Pancreas (tissue), 10 donors: ENCODE measurements at regions of chr2 and their contacts with region 1.

Region 1: DNA sequence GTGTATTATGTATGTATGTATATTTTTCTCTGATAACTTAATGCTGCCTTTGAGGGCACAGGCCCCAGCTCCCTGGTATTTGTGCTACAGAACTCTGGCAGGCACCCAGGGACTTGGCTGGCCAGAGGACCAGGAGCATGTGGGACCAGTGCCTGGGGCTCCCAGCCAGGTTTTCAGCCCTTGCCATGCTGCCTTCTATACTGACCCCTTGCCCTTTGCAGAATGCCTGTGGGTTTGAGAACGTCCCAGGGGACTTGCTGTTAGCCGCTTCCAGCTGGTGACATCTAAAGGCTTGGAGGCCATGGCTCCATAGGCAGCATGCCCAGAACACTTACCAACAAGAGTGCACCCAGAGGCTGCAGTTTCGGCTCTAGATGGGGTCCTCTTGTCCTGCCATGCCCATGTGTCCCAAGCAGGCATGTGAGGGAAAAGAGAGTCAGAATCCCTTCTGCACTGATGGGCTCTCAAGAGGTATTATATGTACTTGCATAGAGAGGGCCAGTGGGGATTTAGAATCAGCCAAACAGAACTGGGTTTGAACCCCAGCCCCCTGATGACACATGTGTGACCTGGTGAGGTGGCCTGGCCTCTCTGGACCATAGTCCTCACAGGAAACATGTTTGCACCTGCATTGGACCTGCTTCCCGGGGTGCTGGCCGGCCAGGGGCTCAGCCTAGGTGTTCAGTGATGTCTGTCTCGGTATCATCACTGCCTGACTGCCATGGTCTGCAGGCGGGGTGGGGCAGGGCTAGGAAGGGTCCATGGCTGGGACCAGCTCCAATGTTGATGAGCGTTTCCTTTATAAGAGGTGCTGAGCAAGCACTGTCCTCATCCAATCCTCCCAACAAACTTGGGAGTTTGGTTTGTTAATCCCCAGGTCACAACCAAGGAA is 119.2 kb upstream of the FHL2 start:
- DNase-seq: peak; percentile 46 to 83 (median 62)
- ATAC-seq: peak; percentile 69 to 87 (median 78)
- H3K4me3 ChIP-seq: no peak overlapping the region
- H3K27ac ChIP-seq: peak overlapping the region in 1 of 4 donors; percentile 12
- H3K4me1 ChIP-seq: peaks cover 0 to 8% (median 5%) of the 10 kb centered on the region in 3 donors
- H3K27me3 ChIP-seq: no peaks in the 10 kb centered on the region
- CTCF ChIP-seq: no peak

Region 2: GRCh38 chr2:105369747-105370690 is 148.0 kb before region 1 on chr2:
- intact Hi-C with region 1: loop called in 2 of 3 experiments (anchors 5 kb)
- DNase-seq: peak; percentile 70 to 93 (median 86)
- ATAC-seq: peak; percentile 96 to 100 (median 98)
- H3K4me3 ChIP-seq: no peak overlapping the region
- H3K27ac ChIP-seq: no peak overlapping the region
- H3K4me1 ChIP-seq: no peaks in the 10 kb centered on the region
- H3K27me3 ChIP-seq: no peaks in the 10 kb centered on the region
- CTCF ChIP-seq: peak; percentile 79 to 87 (median 85)

Region 3: GRCh38 chr2:105769504-105769903 is 251.4 kb after region 1 on chr2:
- intact Hi-C with region 1: no loop called
- DNase-seq: no peak
- ATAC-seq: no peak
- H3K4me3 ChIP-seq: no peak overlapping the region
- H3K27ac ChIP-seq: no peak overlapping the region
- H3K4me1 ChIP-seq: no peaks in the 10 kb centered on the region
- H3K27me3 ChIP-seq: no peaks in the 10 kb centered on the region
- CTCF ChIP-seq: no peak